ENCODE measurements at regions of chr3 and their contacts with region 1.

Region 1: DNA sequence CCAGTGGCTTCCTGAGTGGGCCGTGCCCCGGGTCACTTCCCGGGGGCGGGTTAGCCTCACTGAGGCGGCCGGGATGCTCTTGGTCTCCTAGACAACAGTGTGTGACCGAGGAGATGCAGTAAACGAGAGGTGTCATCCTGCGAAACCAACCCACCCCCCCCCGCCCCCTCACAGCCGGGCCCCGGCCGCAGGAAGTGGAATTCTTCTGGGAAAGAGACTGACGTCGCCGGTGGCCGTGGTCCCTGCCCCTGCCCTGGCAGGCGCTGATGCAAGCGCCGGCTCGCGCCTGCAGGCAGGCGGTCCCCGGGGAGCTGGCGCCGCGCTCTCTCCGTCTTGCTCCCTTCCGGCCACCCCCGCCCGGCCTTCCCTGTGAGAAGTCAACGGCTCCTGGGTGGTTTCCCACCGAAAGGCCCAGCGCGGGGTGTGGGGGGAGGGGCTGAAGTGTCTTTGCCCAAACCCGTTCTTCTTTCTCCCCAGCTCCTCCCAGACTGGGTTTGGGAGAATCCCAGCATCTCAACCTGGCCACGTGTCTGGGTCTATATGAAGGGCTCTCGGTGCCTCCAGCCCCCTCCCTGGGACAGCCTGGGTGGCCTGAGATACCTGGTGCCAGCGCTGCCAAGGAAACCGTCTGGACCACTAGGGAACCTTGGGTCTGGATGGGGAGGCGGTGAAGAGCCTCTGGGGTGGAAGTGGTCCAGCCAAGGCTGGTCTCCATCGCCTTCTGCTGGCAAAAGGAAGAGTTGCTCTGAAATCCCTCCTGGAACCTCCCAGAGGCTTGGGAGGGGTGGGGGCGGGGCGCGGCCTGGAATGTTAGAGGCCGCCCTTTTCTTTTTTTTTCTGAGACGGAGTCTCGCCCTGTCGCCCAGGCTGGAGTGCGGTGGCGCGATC is 47.3 kb downstream of the BHLHE40 start:
- DNase-seq: peak; percentile 97 to 98
- ATAC-seq: peak; percentile 95
- H3K4me3 ChIP-seq: peak overlapping the region in 1 of 2 donors; percentile 15
- H3K27ac ChIP-seq: peak overlapping the region; percentile 50 to 60
- H3K4me1 ChIP-seq: no peaks in the 10 kb centered on the region
- H3K27me3 ChIP-seq: no peaks in the 10 kb centered on the region

Region 2: GRCh38 chr3:4670352-4670751 is 356.2 kb before region 1 on chr3:
- intact Hi-C with region 1: no loop called
- DNase-seq: no peak
- ATAC-seq: no peak
- H3K4me3 ChIP-seq: no peak overlapping the region
- H3K27ac ChIP-seq: no peak overlapping the region
- H3K4me1 ChIP-seq: peaks cover 0 to 3% of the 10 kb centered on the region in 2 donors
- H3K27me3 ChIP-seq: no peaks in the 10 kb centered on the region

Region 3: GRCh38 chr3:4730719-4731118 is 295.9 kb before region 1 on chr3:
- intact Hi-C with region 1: no loop called
- DNase-seq: peak; percentile 56 to 77
- ATAC-seq: peak; percentile 37
- H3K4me3 ChIP-seq: no peak overlapping the region
- H3K27ac ChIP-seq: no peak overlapping the region
- H3K4me1 ChIP-seq: no peaks in the 10 kb centered on the region
- H3K27me3 ChIP-seq: no peaks in the 10 kb centered on the region

Region 4: GRCh38 chr3:4741404-4742307 is 284.9 kb before region 1 on chr3:
- intact Hi-C with region 1: loop called in 1 of 2 experiments (anchors 10 kb)
- DNase-seq: peak; percentile 77 to 79
- ATAC-seq: peak; percentile 92
- H3K4me3 ChIP-seq: no peak overlapping the region
- H3K27ac ChIP-seq: peak overlapping the region; percentile 72 to 94
- H3K4me1 ChIP-seq: peaks cover 0 to 5% of the 10 kb centered on the region in 2 donors
- H3K27me3 ChIP-seq: no peaks in the 10 kb centered on the region

Region 5: GRCh38 chr3:4826237-4827100 is 200.1 kb before region 1 on chr3:
- intact Hi-C with region 1: loop called in 1 of 2 experiments (anchors 5 kb)
- DNase-seq: peak; percentile 94
- ATAC-seq: peak; percentile 91
- H3K4me3 ChIP-seq: no peak overlapping the region
- H3K27ac ChIP-seq: peak overlapping the region; percentile 58 to 87
- H3K4me1 ChIP-seq: peaks cover 2 to 6% of the 10 kb centered on the region in 2 donors
- H3K27me3 ChIP-seq: no peaks in the 10 kb centered on the region

Region 6: DNA sequence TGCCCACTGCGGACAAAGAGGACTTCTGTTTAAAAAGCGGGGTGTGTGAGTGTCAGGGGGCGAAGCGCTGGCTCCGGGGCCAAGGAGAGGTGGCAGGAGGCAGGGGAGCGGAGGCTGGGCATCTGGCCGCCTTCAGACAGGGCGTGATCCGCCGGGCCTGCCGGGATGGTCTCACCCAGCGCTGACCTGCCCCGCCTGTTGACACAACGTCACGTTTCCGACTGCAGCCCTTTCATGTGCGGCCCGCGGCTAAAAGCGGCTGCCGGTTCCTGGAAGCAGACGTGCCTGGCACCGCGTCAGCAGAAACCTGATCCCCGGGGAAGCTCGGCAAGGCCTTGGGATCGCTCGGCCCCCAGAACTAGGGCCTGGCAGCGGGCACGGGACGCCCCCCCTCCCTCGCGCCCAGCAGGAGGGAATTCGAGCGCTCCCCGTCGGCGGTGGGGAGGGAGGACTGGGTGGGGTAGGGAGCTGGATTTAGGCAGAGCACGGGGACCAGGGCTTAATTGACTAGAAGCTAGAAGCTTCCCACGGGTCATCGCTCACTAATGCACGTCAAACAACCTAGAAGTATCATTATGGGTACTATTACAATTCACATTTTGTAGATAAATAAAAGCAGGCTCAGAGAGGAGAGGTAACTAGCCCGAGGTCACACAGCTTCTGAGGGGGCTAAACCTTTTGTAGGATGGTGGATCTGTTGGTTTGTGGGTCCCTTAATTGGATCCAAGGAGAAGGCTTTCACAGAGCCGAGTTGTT is 39.6 kb before region 1 on chr3:
- intact Hi-C with region 1: loop called (anchors 2 kb)
- DNase-seq: peak; percentile 98 to 99
- ATAC-seq: peak; percentile 94
- H3K4me3 ChIP-seq: peak overlapping the region in 1 of 2 donors; percentile 17
- H3K27ac ChIP-seq: peak overlapping the region; percentile 82 to 91
- H3K4me1 ChIP-seq: no peaks in the 10 kb centered on the region
- H3K27me3 ChIP-seq: no peaks in the 10 kb centered on the region

Region 7: DNA sequence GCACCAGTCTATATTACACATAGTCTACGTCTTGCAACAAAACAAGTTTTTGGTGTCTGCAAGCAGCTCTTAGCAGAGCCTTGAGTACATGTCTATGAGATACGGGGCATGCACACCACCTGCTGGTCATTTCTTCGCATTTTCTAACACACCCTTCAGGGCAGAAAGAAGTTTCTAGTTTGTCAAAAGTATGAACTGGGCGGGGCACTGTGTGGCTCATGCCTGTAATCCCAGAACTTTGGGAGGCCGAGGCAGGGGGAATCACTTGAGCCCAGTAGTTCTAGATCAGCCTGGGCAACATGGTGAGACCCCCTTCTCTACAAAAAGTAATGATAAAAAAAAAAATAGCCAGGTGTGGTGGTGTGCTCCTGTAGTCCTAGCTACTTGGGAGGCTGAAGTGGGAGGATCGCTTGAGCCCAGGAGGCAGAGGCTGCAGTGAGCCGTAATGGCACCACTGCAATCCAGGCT is 31.3 kb after region 1 on chr3:
- intact Hi-C with region 1: loop called in 1 of 2 experiments (anchors 2 kb)
- DNase-seq: peak; percentile 82 to 86
- ATAC-seq: peak; percentile 87
- H3K4me3 ChIP-seq: no peak overlapping the region
- H3K27ac ChIP-seq: no peak overlapping the region
- H3K4me1 ChIP-seq: peaks cover 0 to 3% of the 10 kb centered on the region in 2 donors
- H3K27me3 ChIP-seq: no peaks in the 10 kb centered on the region